B cell (primary cell): ENCODE measurements at regions of chr19 and their contacts with region 1.

Region 1: GRCh38 chr19:54325194-54325621 is 12.2 kb upstream of the LILRA5 start:
- DNase-seq: peak; percentile 79
- ATAC-seq: peak; percentile 70
- H3K4me3 ChIP-seq: no peak overlapping the region
- H3K4me3 Mint-ChIP-seq: peak overlapping the region; percentile 42
- H3K27ac ChIP-seq: no peak overlapping the region
- H3K27ac Mint-ChIP-seq: peak overlapping the region; percentile 74
- H3K4me1 ChIP-seq: peaks cover 39 to 48% of the 10 kb centered on the region in 2 donors
- H3K4me1 Mint-ChIP-seq: peaks cover 39% of the 10 kb centered on the region
- H3K27me3 ChIP-seq: no peaks in the 10 kb centered on the region
- H3K27me3 Mint-ChIP-seq: peaks cover 8% of the 10 kb centered on the region
- CTCF ChIP-seq: peak; percentile 98

Region 2: GRCh38 chr19:54305141-54305540 is 20.1 kb before region 1 on chr19:
- CTCF ChIA-PET with region 1: no interaction called
- POLR2A ChIA-PET with region 1: no interaction called
- intact Hi-C with region 1: no loop called
- DNase-seq: no peak
- ATAC-seq: no peak
- H3K4me3 ChIP-seq: no peak overlapping the region
- H3K4me3 Mint-ChIP-seq: no peak overlapping the region
- H3K27ac ChIP-seq: no peak overlapping the region
- H3K27ac Mint-ChIP-seq: no peak overlapping the region
- H3K4me1 ChIP-seq: peaks cover 6 to 7% of the 10 kb centered on the region in 2 donors
- H3K4me1 Mint-ChIP-seq: peaks cover 7% of the 10 kb centered on the region
- H3K27me3 ChIP-seq: peaks cover 0 to 60% (median 21%) of the 10 kb centered on the region in 4 experiments
- H3K27me3 Mint-ChIP-seq: peaks cover 47% of the 10 kb centered on the region
- CTCF ChIP-seq: no peak

Region 3: GRCh38 chr19:54339646-54340358 is 14.6 kb after region 1 on chr19:
- CTCF ChIA-PET with region 1: interaction called, 61 read pairs
- POLR2A ChIA-PET with region 1: no interaction called
- intact Hi-C with region 1: loop called (anchors 1 kb)
- DNase-seq: peak; percentile 82
- ATAC-seq: peak; percentile 80
- H3K4me3 ChIP-seq: peak overlapping the region in 1 of 5 experiments; percentile 25
- H3K4me3 Mint-ChIP-seq: peak overlapping the region; percentile 77
- H3K27ac ChIP-seq: peak overlapping the region; percentile 31 to 69
- H3K27ac Mint-ChIP-seq: peak overlapping the region; percentile 87
- H3K4me1 ChIP-seq: peaks cover 65 to 67% of the 10 kb centered on the region in 2 donors
- H3K4me1 Mint-ChIP-seq: peaks cover 78% of the 10 kb centered on the region
- H3K27me3 ChIP-seq: no peaks in the 10 kb centered on the region
- H3K27me3 Mint-ChIP-seq: no peaks in the 10 kb centered on the region
- CTCF ChIP-seq: no peak

Region 4: DNA sequence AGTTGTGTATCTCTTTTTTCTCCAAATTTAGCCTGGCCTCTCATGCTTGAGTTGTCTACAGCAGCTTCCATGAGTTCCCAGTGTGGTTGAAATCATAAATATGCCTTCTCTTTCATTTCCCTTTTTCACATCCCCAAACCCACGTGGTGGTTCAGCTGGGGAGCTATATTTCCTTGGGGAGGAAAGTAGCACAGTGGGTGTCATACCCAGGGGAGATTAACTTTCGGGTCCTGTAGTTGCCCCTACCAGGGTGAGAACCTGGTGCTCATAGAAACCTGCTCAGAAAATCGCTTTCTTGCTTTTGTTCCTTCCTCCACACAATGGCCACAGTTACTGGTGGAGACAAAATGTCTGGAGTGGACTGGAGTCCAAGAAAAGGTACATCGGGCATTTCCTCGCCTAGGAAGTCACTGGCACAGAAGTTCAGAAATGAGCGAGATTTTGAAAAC is 20.8 kb after region 1 on chr19:
- CTCF ChIA-PET with region 1: interaction called, 61 read pairs
- POLR2A ChIA-PET with region 1: no interaction called
- intact Hi-C with region 1: loop called (anchors 2 kb)
- DNase-seq: peak; percentile 80
- ATAC-seq: peak; percentile 97
- H3K4me3 ChIP-seq: peak overlapping the region in 3 of 5 experiments; percentile 21 to 52 (median 27)
- H3K4me3 Mint-ChIP-seq: peak overlapping the region; percentile 81
- H3K27ac ChIP-seq: peak overlapping the region; percentile 72
- H3K27ac Mint-ChIP-seq: peak overlapping the region; percentile 85
- H3K4me1 ChIP-seq: peaks cover 78 to 85% of the 10 kb centered on the region in 2 donors
- H3K4me1 Mint-ChIP-seq: peaks cover 73% of the 10 kb centered on the region
- H3K27me3 ChIP-seq: peaks cover 0 to 2% (median 0%) of the 10 kb centered on the region in 4 experiments
- H3K27me3 Mint-ChIP-seq: no peaks in the 10 kb centered on the region
- CTCF ChIP-seq: no peak

Region 5: GRCh38 chr19:54352041-54352440 is 26.8 kb after region 1 on chr19:
- CTCF ChIA-PET with region 1: interaction called, 117 read pairs
- POLR2A ChIA-PET with region 1: no interaction called
- intact Hi-C with region 1: loop called (anchors 1 kb)
- DNase-seq: peak; percentile 61
- ATAC-seq: peak; percentile 79
- H3K4me3 ChIP-seq: peak overlapping the region in 1 of 5 experiments; percentile 2
- H3K4me3 Mint-ChIP-seq: peak overlapping the region; percentile 66
- H3K27ac ChIP-seq: peak overlapping the region; percentile 69 to 71
- H3K27ac Mint-ChIP-seq: peak overlapping the region; percentile 89
- H3K4me1 ChIP-seq: peaks cover 49 to 62% of the 10 kb centered on the region in 2 donors
- H3K4me1 Mint-ChIP-seq: peaks cover 55% of the 10 kb centered on the region
- H3K27me3 ChIP-seq: peaks cover 0 to 2% (median 0%) of the 10 kb centered on the region in 4 experiments
- H3K27me3 Mint-ChIP-seq: no peaks in the 10 kb centered on the region
- CTCF ChIP-seq: peak; percentile 30

Region 6: DNA sequence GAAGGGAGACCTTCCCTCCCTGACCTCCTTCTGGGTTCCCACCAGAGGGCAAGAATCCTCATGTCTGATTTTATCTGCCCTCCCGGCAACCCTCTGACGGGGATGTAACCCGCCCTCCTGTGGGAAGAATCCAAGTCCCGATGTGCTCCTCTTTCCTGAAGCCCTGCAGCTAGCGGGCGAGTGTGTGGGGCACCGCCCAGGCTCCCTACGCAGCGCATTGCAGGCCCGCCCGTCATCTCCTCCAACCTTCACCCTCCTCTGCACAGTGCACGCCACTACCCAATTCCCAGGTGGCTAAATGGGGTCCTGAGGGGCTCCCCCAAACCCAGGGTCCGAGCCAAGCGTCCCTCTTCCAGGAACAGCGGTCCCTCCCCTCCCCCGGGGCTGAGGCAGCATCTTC is 32.2 kb after region 1 on chr19:
- CTCF ChIA-PET with region 1: interaction called, 117 read pairs
- POLR2A ChIA-PET with region 1: no interaction called
- intact Hi-C with region 1: loop called (anchors 1 kb)
- DNase-seq: no peak
- ATAC-seq: no peak
- H3K4me3 ChIP-seq: no peak overlapping the region
- H3K4me3 Mint-ChIP-seq: no peak overlapping the region
- H3K27ac ChIP-seq: no peak overlapping the region
- H3K27ac Mint-ChIP-seq: no peak overlapping the region
- H3K4me1 ChIP-seq: peaks cover 24 to 37% of the 10 kb centered on the region in 2 donors
- H3K4me1 Mint-ChIP-seq: peaks cover 41% of the 10 kb centered on the region
- H3K27me3 ChIP-seq: no peaks in the 10 kb centered on the region
- H3K27me3 Mint-ChIP-seq: no peaks in the 10 kb centered on the region
- CTCF ChIP-seq: no peak